PC-9 (cell line): ENCODE measurements at regions of chr13 and their contacts with region 1.

Region 1: DNA sequence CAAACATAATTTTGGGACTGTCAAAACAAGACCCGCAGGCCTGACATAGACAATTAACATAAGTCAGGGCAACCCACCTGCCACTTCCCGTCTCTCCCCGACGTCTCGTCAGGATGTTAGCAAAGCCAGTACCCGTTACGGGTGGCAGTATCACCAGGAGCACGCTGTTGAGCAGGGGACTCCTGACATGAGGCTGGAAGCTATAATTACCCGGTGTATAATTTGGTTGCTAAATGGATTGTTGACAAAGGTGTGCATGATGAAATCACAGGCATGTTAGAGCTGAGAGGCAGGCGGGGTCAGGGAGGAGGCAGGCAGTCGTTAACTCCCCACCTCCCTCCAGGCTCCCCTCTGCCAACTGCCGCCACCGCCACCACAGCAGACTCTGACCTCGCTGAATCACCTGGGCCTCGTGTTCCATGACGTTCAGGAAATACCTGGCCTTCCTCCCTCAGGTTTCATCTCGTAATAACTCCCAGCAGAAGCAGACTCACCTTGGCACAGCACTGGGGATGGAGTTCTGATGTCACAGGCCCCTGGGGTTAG is 198.6 kb downstream of the KATNAL1 start:
- DNase-seq: peak; percentile 84 to 94
- H3K4me3 ChIP-seq: peak overlapping the region; percentile 40; the same call in 1 of the 2 replicates
- H3K27ac ChIP-seq: peak overlapping the region; percentile 77
- H3K4me1 ChIP-seq: peaks cover 35% of the 10 kb centered on the region
- H3K27me3 ChIP-seq: no peaks in the 10 kb centered on the region
- CTCF ChIP-seq: no peak

Region 2: DNA sequence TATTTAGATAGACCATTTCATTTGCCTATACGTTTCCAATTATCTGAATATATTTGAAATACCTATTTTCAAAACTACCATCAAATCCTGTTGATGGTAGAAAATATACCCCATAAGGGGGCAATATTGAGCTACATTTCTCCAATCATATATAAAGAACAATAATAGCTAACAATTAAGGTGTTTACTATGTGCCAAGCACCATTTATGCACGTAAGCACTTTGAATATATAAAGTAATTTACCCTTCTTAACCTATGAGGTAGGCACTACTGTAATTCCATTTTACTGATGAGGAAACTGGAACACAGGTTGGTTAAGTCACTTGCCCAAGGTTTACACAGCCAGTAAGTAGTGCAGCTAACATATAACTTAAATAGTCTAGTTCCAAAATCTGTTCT is 337.5 kb before region 1 on chr13:
- CTCF ChIA-PET with region 1: interaction called, 13 read pairs
- POLR2A ChIA-PET with region 1: no interaction called
- intact Hi-C with region 1: loop called (anchors 1 kb)
- DNase-seq: peak in 1 of 2 experiments; percentile 46
- H3K4me3 ChIP-seq: no peak overlapping the region
- H3K27ac ChIP-seq: no peak overlapping the region
- H3K4me1 ChIP-seq: no peaks in the 10 kb centered on the region
- H3K27me3 ChIP-seq: no peaks in the 10 kb centered on the region
- CTCF ChIP-seq: peak; percentile 78

Region 3: DNA sequence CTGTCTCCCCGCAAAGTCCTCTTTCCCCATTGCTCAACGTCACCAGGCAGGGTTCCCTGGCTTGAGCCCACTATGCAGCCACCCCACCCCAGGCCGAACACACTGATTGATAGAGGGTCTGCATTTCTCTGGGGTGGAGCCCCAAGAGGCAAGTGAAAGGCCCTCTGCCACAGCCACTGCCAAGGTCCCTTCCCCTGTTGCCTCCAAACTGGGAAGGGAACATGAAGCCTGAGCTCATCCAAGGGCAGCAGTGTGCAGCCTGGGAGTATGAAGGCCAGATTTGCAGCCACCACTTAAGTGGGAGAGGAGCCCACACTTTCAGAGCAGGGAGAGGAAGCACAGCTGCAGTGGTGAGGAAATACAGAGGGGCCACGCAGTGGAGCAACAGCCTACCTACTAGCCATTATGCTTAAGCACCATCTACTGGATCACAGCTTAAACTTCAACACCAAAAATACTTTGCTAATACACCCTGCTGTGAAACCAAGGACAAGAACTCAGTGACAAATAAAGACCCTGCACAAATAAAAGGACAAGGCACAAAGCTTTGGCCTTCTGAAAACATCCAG is 306.9 kb before region 1 on chr13:
- CTCF ChIA-PET with region 1: no interaction called
- POLR2A ChIA-PET with region 1: no interaction called
- intact Hi-C with region 1: no loop called
- DNase-seq: no peak
- H3K4me3 ChIP-seq: no peak overlapping the region
- H3K27ac ChIP-seq: no peak overlapping the region
- H3K4me1 ChIP-seq: no peaks in the 10 kb centered on the region
- H3K27me3 ChIP-seq: no peaks in the 10 kb centered on the region
- CTCF ChIP-seq: no peak

Region 4: DNA sequence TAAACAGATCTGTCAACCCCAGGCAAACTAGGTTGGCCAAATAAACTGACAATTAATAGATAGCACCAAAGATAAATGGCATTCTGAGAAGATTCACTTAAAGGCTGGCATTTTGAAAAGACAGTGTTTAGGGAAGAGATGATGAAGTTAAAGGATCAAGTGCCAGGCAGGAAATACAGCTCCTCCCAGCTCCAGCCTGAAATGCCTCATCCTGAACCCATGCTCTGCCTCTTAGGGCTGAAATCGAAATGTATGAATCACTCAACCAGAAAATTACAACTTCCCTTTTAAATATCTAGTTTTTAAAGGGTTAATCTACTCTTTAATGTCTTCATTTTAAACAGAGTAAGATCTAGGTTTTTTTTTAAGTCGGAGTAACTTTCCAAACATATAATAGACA is 87.2 kb before region 1 on chr13:
- CTCF ChIA-PET with region 1: interaction called, 7 read pairs
- POLR2A ChIA-PET with region 1: no interaction called
- intact Hi-C with region 1: loop called (anchors 2 kb)
- DNase-seq: no peak
- H3K4me3 ChIP-seq: no peak overlapping the region
- H3K27ac ChIP-seq: no peak overlapping the region
- H3K4me1 ChIP-seq: peaks cover 41% of the 10 kb centered on the region
- H3K27me3 ChIP-seq: no peaks in the 10 kb centered on the region
- CTCF ChIP-seq: no peak

Region 5: DNA sequence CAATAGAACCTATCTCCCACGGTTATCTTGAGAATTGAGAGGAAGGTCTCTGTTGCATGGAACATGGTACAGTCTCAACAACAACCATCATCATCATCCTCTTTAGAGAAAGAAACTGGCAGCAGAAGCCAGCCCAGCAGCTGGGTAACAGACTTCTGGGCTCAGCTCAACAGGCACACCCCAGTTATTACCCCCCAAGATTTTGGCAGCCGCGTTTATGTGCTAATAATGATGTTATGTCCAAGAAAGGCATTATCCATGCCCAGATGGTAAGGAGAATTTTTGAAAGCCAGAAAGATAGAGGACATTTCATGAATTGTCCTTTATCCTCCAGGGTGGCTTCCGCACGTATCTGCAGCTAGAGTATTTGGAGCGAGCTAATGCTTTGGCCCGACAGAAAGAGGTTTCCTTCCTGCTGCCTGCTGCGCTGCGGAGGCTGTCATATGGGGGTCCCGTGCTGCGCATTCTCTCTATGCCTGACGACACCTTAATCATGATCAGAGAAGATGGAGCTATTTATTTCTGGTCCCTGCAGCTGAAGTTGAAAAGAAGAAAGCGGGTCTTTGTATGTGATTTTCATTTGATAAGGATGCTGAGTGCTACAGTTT is 913.6 kb after region 1 on chr13:
- CTCF ChIA-PET with region 1: no interaction called
- POLR2A ChIA-PET with region 1: no interaction called
- intact Hi-C with region 1: no loop called
- DNase-seq: no peak
- H3K4me3 ChIP-seq: no peak overlapping the region
- H3K27ac ChIP-seq: no peak overlapping the region
- H3K4me1 ChIP-seq: no peaks in the 10 kb centered on the region
- H3K27me3 ChIP-seq: peaks cover 29% of the 10 kb centered on the region; the same call in 1 of the 2 replicates
- CTCF ChIP-seq: no peak